ENCODE measurements at regions of chrX and their contacts with region 1.

Region 1: DNA sequence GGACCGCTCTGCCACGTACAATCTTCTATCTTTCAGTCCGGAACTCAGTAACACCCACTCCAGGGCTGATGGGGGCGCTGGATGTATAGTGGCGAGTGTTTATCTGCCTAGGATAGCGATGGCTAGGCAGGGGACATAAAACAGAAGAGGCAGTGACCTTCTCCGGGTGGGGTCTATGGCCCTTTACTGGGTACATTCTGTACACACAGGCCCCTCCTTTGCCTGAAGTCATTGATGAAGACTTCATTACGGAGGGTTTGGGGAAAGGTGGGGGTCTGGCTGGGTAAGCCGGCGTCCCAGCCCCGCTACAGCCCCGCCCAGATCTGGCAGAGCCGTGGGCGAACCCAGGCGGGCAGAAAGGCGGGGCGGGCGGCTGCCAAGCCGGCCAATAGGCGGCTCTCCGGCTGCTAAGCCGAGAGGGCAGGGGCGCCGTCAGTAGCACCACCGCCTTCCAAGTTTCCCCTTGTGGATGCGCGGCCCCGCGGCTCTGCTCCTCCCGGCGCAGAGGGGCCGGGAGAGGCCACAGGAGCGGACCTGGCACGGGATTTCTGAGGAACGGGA is at the start of gene CHST7:
- DNase-seq: peak; percentile 63 to 84 (median 76)
- H3K4me3 ChIP-seq: peak within 1 kb of the TSS; percentile 54
- H3K27ac ChIP-seq: peak within 1 kb of the TSS; percentile 44 to 54
- H3K4me1 ChIP-seq: no peaks in the 10 kb centered on the region
- H3K27me3 ChIP-seq: no peaks in the 10 kb centered on the region
- CTCF ChIP-seq: peak in 2 of 3 donors; percentile 30 to 51
- EP300 ChIP-seq: no peak
- POLR2A ChIP-seq: no peak
- total RNA-seq, gene CHST7: 5.9 to 144 (median 33.8) TPM

Region 2: DNA sequence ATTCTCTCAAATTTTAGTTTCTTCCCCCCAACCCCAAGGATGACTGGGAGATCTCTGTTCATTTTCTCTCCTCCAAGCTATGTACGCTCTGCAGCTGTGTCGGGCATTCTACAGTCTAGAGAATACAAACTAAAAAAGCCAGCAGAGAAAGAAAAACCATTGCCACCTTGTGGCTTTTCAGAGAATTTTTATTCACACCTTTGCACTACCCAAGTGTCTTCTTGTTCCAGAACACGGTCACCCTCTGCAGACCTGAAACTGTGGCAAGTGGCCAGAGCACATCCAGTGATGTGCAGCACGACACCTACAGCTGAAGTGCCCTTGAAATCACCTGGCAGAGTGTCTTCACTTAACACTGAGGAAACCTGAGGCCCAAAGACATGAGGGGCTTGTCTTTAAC is 68.7 kb after region 1 on chrX:
- intact Hi-C with region 1: loop called in 3 of 4 experiments (anchors 5 to 10 kb)
- DNase-seq: peak in 2 of 5 donors; percentile 26 to 31
- H3K4me3 ChIP-seq: no peak overlapping the region
- H3K27ac ChIP-seq: no peak overlapping the region
- H3K4me1 ChIP-seq: no peaks in the 10 kb centered on the region
- H3K27me3 ChIP-seq: no peaks in the 10 kb centered on the region
- CTCF ChIP-seq: peak in 2 of 3 donors; percentile 22 to 45
- EP300 ChIP-seq: no peak
- POLR2A ChIP-seq: no peak

Region 3: GRCh38 chrX:46649421-46650260 is 76.2 kb after region 1 on chrX:
- intact Hi-C with region 1: loop called in 2 of 4 experiments (anchors 5 to 10 kb)
- DNase-seq: peak; percentile 46 to 63 (median 60)
- H3K4me3 ChIP-seq: no peak overlapping the region
- H3K27ac ChIP-seq: no peak overlapping the region
- H3K4me1 ChIP-seq: no peaks in the 10 kb centered on the region
- H3K27me3 ChIP-seq: no peaks in the 10 kb centered on the region
- CTCF ChIP-seq: no peak
- EP300 ChIP-seq: no peak
- POLR2A ChIP-seq: no peak